ENCODE measurements at regions of chr16 and their contacts with region 1.

Region 1: DNA sequence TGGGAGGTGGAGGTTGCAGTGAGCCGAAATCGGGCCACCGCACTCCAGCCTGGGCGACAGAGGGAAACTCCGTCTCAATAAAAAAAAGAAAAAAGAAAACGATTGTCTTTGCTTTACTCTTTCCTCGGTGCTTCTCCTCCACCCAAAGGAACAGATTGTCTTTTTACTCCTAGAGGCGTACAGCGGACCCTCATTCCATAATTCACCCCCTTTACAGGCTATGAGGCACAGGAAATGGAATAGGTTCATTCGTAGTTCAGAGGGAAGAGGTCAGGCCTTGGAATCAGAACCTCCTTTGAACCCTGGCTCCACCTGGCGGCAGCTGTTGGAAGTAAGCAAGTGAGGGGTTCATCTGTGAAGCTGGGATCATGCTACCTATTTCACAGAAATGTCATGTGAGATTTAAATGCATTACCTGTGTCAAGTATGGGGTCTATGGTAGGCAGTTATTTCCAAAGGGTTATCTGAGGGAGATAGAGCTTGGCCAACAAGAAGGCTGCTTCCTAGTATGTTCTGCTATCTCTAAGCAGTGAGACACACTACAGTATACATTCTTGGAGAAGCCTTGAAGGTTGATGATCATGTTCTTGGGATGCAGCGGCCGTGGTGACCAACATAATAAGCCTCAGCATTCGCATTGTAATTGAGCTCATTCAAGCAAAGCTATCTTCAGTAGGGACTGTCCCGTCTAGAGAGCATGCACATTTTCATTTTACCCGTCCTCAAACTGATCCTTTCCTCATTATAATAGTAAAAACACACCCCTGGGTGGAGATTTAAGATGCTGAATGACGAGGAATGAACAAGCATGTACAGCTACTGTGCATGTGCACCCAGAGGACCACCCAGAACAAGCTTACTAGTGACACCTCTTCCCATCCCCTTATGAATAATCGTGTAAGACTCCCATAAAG is 18.7 kb upstream of the ZNF689 start:
- DNase-seq: no peak
- H3K4me3 ChIP-seq: no peak overlapping the region
- CTCF ChIP-seq: peak; percentile 84

Region 2: GRCh38 chr16:30429678-30430427 is 199.0 kb before region 1 on chr16 and contains the start of gene DCTPP1:
- CTCF ChIA-PET with region 1: interaction called, 23 read pairs
- POLR2A ChIA-PET with region 1: no interaction called
- DNase-seq: peak; percentile 91
- H3K4me3 ChIP-seq: peak within 1 kb of the TSS; percentile 94
- CTCF ChIP-seq: peak; percentile 71

Region 3: GRCh38 chr16:30534368-30535105 is 94.3 kb before region 1 on chr16 and contains the start of gene ZNF747:
- CTCF ChIA-PET with region 1: interaction called, 20 read pairs
- POLR2A ChIA-PET with region 1: interaction called, 4 read pairs
- DNase-seq: no peak
- H3K4me3 ChIP-seq: peak within 1 kb of the TSS; percentile 70
- CTCF ChIP-seq: no peak

Region 4: DNA sequence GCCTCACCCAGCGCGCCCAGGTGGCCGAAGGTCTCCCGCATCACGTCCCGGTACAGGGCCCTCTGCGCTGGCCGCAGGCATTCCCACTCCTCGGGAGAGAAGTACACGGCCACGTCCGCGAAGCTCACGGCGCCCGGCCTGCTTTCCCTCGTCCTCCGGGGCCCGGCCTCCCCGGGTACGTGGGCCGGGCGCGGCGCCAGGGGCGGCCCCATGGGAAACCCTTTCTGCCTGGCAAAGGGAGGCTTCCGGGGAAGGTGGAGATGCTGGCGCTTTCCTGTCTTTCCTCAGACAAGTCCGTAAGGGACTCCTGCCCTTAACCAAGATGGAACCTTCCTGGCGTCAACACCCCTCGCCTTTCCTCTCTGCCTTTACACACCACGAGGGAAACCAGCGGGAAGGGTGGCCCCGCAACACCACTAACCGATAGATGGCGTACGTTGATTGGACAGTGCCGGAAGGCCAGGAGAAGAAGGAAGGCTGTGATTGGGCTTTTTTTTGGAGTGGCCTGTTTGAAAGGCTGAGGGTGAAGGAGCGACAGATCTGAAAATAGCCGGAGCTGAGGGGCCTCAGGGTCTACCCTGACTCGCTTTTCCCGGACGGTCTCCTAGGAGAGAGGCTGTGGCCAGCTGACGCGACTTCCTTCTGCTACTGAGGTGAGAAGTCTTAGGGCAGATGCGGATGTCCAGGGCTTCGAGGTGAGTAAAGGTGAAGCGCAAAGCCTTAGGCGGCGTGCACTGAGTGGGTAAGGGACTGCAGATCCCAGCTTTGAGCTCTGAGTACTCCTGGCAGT is 43.3 kb before region 1 on chr16 and contains the start of gene ZNF785:
- CTCF ChIA-PET with region 1: interaction called, 30 read pairs
- POLR2A ChIA-PET with region 1: no interaction called
- DNase-seq: peak; percentile 96
- H3K4me3 ChIP-seq: peak within 1 kb of the TSS; percentile 79
- CTCF ChIP-seq: peak; percentile 11

Region 5: DNA sequence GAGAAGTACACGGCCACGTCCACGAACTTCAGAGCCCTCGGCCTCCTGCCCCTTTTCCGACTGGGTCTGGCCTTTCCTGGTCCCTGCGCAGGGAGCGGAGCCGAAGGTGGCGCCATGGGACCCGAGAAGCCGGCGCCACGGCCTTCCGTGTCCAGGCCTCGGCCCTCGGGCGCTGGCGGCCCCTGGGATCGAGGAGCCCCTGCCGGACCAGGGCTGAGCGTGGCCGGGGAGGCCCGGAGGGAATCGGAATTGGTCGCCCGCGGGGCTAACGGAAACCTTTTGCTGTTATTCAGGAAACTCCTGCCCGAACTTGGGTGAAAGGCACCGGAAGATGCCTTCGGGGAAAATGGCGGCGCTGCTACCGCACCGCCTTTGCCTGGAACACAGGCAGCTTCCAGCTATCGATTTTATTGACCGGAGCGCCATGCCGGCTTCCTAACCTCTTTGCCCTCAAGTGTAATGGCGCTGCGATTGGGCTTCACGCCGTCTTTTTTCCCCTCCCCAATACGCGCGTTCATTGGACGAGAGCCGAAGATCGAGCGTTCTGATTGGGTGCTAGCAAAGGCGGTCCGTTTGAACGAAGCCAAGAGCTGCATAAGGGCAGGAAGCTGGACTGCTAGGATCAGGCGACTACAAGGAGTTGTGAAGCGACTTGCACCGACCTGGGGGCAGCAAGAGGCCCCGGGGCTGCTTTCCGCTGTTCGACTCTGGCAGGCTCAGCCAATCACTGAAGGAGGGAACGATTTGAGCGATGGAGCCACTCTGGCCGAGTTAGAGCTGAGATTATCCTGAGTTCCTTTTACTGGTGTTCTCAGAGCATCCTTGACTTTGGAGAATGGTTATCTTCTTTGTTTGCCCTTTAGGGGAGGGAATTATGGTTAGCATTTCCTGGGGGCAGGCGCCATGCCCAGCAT is 18.7 kb before region 1 on chr16 and contains the start of gene ZNF689:
- CTCF ChIA-PET with region 1: interaction called, 21 read pairs
- POLR2A ChIA-PET with region 1: interaction called, 3 read pairs
- DNase-seq: peak; percentile 78
- H3K4me3 ChIP-seq: peak within 1 kb of the TSS; percentile 76
- CTCF ChIP-seq: no peak

Region 6: GRCh38 chr16:30829130-30830071 is 200.5 kb after region 1 on chr16:
- CTCF ChIA-PET with region 1: no interaction called
- POLR2A ChIA-PET with region 1: no interaction called
- DNase-seq: no peak
- H3K4me3 ChIP-seq: no peak overlapping the region
- CTCF ChIP-seq: no peak